AG04450 (cell line): ENCODE measurements at regions of chr19 and their contacts with region 1.

Region 1: GRCh38 chr19:49497047-49497788 is 984 bp downstream of the RPS11 start:
- DNase-seq: no peak
- H3K4me3 ChIP-seq: peak overlapping the region; percentile 92
- H3K27ac ChIP-seq: peak overlapping the region; percentile 21
- H3K27me3 ChIP-seq: no peaks in the 10 kb centered on the region
- CTCF ChIP-seq: no peak

Region 2: GRCh38 chr19:49528211-49528771 is 31.1 kb after region 1 on chr19:
- CTCF ChIA-PET with region 1: no interaction called
- POLR2A ChIA-PET with region 1: interaction called, 18 read pairs
- DNase-seq: no peak
- H3K4me3 ChIP-seq: peak overlapping the region; percentile 79
- H3K27ac ChIP-seq: peak overlapping the region; percentile 87
- H3K27me3 ChIP-seq: no peaks in the 10 kb centered on the region
- CTCF ChIP-seq: no peak